ENCODE measurements at regions of chr3 and their contacts with region 1.

Region 1: GRCh38 chr3:129120254-129121004 is 1.2 kb downstream of the RAB43 start:
- DNase-seq: peak; percentile 94
- H3K4me3 Mint-ChIP-seq: peak overlapping the region; percentile 69
- H3K27ac Mint-ChIP-seq: peak overlapping the region; percentile 27
- H3K4me1 Mint-ChIP-seq: peaks cover 55% of the 10 kb centered on the region
- H3K27me3 Mint-ChIP-seq: no peaks in the 10 kb centered on the region
- CTCF ChIP-seq: no peak

Region 2: GRCh38 chr3:129058441-129059200 is 61.8 kb before region 1 on chr3:
- CTCF ChIA-PET with region 1: interaction called, 30 read pairs
- intact Hi-C with region 1: loop called (anchors 5 kb)
- DNase-seq: peak; percentile 38
- H3K4me3 Mint-ChIP-seq: no peak overlapping the region
- H3K27ac Mint-ChIP-seq: no peak overlapping the region
- H3K4me1 Mint-ChIP-seq: peaks cover 26% of the 10 kb centered on the region
- H3K27me3 Mint-ChIP-seq: peaks cover 36% of the 10 kb centered on the region
- CTCF ChIP-seq: no peak

Region 3: DNA sequence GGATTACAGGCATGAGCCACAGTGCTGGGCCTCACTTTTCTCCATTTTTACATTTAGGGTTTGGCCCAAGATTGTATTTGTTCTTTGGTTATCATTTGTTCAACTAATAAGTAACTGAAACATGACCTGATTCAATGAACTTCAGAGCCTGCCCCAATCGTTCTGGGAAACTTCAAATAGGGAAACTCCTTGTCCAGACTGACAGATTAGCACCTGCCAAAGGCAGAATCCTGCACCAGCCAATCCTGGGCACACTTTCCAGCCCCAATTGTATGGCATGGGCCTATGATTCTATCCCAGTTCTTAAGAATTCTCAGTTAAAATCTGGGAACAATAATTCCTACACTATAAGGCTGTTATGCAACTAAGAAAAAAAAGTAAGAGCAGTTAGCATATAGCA is 19.5 kb after region 1 on chr3:
- CTCF ChIA-PET with region 1: interaction called, 14 read pairs
- intact Hi-C with region 1: no loop called
- DNase-seq: no peak
- H3K4me3 Mint-ChIP-seq: no peak overlapping the region
- H3K27ac Mint-ChIP-seq: no peak overlapping the region
- H3K4me1 Mint-ChIP-seq: no peaks in the 10 kb centered on the region
- H3K27me3 Mint-ChIP-seq: no peaks in the 10 kb centered on the region
- CTCF ChIP-seq: no peak

Region 4: GRCh38 chr3:129867506-129868124 is 747.2 kb after region 1 on chr3:
- CTCF ChIA-PET with region 1: no interaction called
- intact Hi-C with region 1: no loop called
- DNase-seq: no peak
- H3K4me3 Mint-ChIP-seq: no peak overlapping the region
- H3K27ac Mint-ChIP-seq: no peak overlapping the region
- H3K4me1 Mint-ChIP-seq: peaks cover 6% of the 10 kb centered on the region
- H3K27me3 Mint-ChIP-seq: no peaks in the 10 kb centered on the region
- CTCF ChIP-seq: no peak